Testis (tissue), 5 donors: ENCODE measurements at regions of chr17 and their contacts with region 1.

Region 1: DNA sequence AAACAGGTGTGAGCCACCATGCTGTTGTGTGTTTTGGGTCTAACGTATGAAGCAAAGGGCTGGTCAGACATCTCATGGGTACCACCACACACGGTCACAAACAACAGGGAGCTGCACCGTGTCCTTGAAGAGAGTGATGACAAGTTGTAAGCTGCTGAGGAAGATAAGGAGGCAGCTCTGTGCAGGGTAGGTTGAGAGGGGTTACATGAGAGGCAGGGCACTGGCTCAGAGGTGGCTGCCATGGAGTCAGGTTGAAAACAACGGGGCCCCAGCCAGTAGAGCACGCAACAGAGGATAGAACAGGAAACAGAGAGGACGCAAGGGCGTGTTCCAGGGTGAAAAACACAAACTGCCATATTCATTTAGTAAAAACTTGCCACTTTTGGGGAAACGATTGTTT is 52.2 kb downstream of the TRARG1 start:
- DNase-seq: no peak
- H3K4me3 ChIP-seq: no peak overlapping the region
- H3K27ac ChIP-seq: no peak overlapping the region
- H3K4me1 ChIP-seq: no peaks in the 10 kb centered on the region
- H3K27me3 ChIP-seq: no peaks in the 10 kb centered on the region
- CTCF ChIP-seq: no peak
- POLR2A ChIP-seq: no peak

Region 2: GRCh38 chr17:1206026-1206777 is 125.5 kb before region 1 on chr17:
- intact Hi-C with region 1: no loop called
- DNase-seq: no peak
- H3K4me3 ChIP-seq: no peak overlapping the region
- H3K27ac ChIP-seq: no peak overlapping the region
- H3K4me1 ChIP-seq: peaks cover 5% of the 10 kb centered on the region
- H3K27me3 ChIP-seq: no peaks in the 10 kb centered on the region
- CTCF ChIP-seq: no peak
- POLR2A ChIP-seq: no peak

Region 3: GRCh38 chr17:1267471-1267947 is 64.2 kb before region 1 on chr17:
- intact Hi-C with region 1: loop called (anchors 5 kb)
- DNase-seq: no peak
- H3K4me3 ChIP-seq: peak overlapping the region; percentile 67 to 82
- H3K27ac ChIP-seq: peak overlapping the region; percentile 64 to 92
- H3K4me1 ChIP-seq: peaks cover 3% of the 10 kb centered on the region
- H3K27me3 ChIP-seq: no peaks in the 10 kb centered on the region
- CTCF ChIP-seq: no peak
- POLR2A ChIP-seq: no peak

Region 4: GRCh38 chr17:1275962-1276736 is 55.6 kb before region 1 on chr17:
- intact Hi-C with region 1: loop called (anchors 5 kb)
- DNase-seq: peak; percentile 75
- H3K4me3 ChIP-seq: no peak overlapping the region
- H3K27ac ChIP-seq: no peak overlapping the region
- H3K4me1 ChIP-seq: no peaks in the 10 kb centered on the region
- H3K27me3 ChIP-seq: no peaks in the 10 kb centered on the region
- CTCF ChIP-seq: peak; percentile 60 to 85 (median 75)
- POLR2A ChIP-seq: no peak

Region 5: GRCh38 chr17:1294157-1294717 is 37.5 kb before region 1 on chr17:
- intact Hi-C with region 1: no loop called
- DNase-seq: no peak
- H3K4me3 ChIP-seq: no peak overlapping the region
- H3K27ac ChIP-seq: no peak overlapping the region
- H3K4me1 ChIP-seq: no peaks in the 10 kb centered on the region
- H3K27me3 ChIP-seq: no peaks in the 10 kb centered on the region
- CTCF ChIP-seq: no peak
- POLR2A ChIP-seq: no peak